Cardiac septum (tissue), 1 donor: ENCODE measurements at regions of chr17 and their contacts with region 1.

Region 1: DNA sequence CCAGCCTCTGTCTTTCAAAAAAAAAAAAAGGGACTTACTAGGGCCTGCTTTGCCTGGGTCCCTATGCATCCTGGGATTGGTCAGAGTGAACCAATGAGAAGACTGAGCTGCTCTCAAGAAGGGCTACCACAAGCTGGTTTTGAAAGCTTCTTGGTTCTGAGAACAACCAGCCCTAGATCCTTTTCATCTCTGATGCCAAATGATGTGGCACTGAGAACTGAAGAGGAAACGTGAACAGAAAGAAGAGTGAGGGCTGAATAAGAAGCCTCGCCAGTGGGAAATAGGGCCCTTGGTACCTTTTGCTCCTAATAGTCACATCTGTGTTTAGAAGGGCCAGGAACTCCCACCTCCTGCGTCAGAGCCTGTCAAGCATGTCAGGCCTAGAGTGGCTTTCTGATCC is 10.7 kb downstream of the TACO1 start:
- DNase-seq: no peak

Region 2: GRCh38 chr17:63425482-63425881 is 185.9 kb before region 1 on chr17:
- intact Hi-C with region 1: loop called (anchors 2 kb)
- DNase-seq: no peak